Activated CD4-positive, alpha-beta memory T cell treated with anti-CD3 and anti-CD28 coated beads for 36 hours (primary cell): ENCODE measurements at regions of chr5 and their contacts with region 1.

Region 1: GRCh38 chr5:35919191-35919590 is 19.2 kb downstream of the CAPSL start:
- DNase-seq: peak; percentile 63
- H3K4me3 Mint-ChIP-seq: no peak overlapping the region
- H3K27ac Mint-ChIP-seq: peak overlapping the region; percentile 67
- H3K4me1 Mint-ChIP-seq: peaks cover 48% of the 10 kb centered on the region
- H3K27me3 Mint-ChIP-seq: no peaks in the 10 kb centered on the region

Region 2: DNA sequence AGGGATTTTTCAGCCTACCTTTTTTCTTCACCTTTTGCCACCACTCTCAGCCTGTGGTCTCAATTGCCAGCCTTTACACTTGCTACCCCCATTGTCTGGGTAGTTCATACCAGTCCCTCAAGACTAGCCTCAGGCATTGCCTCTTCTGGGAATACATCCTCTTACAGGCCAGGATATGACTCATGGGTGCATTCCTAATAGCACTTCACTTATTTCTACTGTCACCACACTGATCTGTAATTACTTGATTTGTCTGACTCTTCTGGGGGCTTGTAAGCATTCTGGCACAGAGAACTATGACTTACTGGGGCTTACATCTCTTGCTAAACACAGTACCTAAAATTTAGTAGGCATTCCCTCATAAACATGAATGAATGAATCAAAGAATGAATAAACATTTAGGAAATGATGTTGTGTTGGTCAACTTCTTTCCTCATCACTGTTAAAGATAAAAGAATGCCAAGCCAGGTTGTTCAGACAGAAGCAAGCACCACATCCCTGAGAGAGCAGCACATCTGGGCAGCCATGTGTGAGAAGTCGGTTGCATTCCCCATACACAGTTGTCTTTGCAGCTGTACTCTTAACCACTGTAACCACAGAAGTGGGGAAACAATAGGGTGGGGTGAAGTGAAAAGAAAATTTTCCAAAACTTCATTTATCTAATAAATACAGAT is 34.9 kb before region 1 on chr5:
- CTCF ChIA-PET with region 1: no interaction called
- POLR2A ChIA-PET with region 1: no interaction called
- intact Hi-C with region 1: loop called (anchors 1 kb)
- DNase-seq: no peak
- H3K4me3 Mint-ChIP-seq: no peak overlapping the region
- H3K27ac Mint-ChIP-seq: peak overlapping the region; percentile 86
- H3K4me1 Mint-ChIP-seq: peaks cover 40% of the 10 kb centered on the region
- H3K27me3 Mint-ChIP-seq: no peaks in the 10 kb centered on the region

Region 3: GRCh38 chr5:36041538-36041846 is 122.3 kb after region 1 on chr5:
- CTCF ChIA-PET with region 1: no interaction called
- POLR2A ChIA-PET with region 1: no interaction called
- intact Hi-C with region 1: no loop called
- DNase-seq: no peak
- H3K4me3 Mint-ChIP-seq: no peak overlapping the region
- H3K27ac Mint-ChIP-seq: no peak overlapping the region
- H3K4me1 Mint-ChIP-seq: no peaks in the 10 kb centered on the region
- H3K27me3 Mint-ChIP-seq: peaks cover 7% of the 10 kb centered on the region